Activated CD8-positive, alpha-beta memory T cell treated with anti-CD3 and anti-CD28 coated beads, Interleukin-2, amount 10 ng/mL, durations not matched to agents 7 days and 5 days (primary cell): ENCODE measurements at regions of chr1 and their contacts with region 1.

Region 1: GRCh38 chr1:109075531-109076490 is at the start of gene TAF13:
- DNase-seq: peak; percentile 94
- ATAC-seq: peak; percentile 100
- H3K4me3 Mint-ChIP-seq: peak within 1 kb of the TSS; percentile 96
- H3K27ac Mint-ChIP-seq: peak within 1 kb of the TSS; percentile 96
- H3K4me1 Mint-ChIP-seq: peaks cover 18% of the 10 kb centered on the region
- H3K27me3 Mint-ChIP-seq: no peaks in the 10 kb centered on the region
- total RNA-seq, gene TAF13: 18.1 to 26.4 TPM

Region 2: DNA sequence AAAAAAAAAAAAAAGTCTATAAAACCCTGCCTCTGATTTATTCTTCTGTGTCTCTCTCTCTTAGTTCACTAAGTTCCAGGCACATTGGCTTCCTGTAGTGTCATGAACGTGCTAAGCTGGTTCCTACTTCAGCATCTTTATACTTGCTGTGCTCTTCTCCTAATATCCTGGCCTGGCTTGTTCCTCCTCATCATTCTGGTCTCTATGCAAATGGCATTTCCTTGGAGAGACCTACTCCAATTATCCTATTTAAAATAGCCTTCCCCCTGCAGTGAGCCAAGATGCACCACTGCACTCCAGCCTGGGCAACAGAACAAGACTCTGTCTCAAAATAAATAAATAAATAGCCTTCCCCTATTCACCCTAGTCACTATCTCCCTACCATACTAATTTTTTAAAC is 102.9 kb before region 1 on chr1:
- CTCF ChIA-PET with region 1: no interaction called
- DNase-seq: no peak
- ATAC-seq: no peak
- H3K4me3 Mint-ChIP-seq: no peak overlapping the region
- H3K27ac Mint-ChIP-seq: no peak overlapping the region
- H3K4me1 Mint-ChIP-seq: peaks cover 5% of the 10 kb centered on the region
- H3K27me3 Mint-ChIP-seq: no peaks in the 10 kb centered on the region

Region 3: GRCh38 chr1:109090196-109091077 is 14.6 kb after region 1 on chr1 and contains the start of gene TMEM167B:
- CTCF ChIA-PET with region 1: interaction called, 22 read pairs
- DNase-seq: peak; percentile 95
- ATAC-seq: peak; percentile 96
- H3K4me3 Mint-ChIP-seq: peak within 1 kb of the TSS; percentile 98
- H3K27ac Mint-ChIP-seq: peak within 1 kb of the TSS; percentile 97
- H3K4me1 Mint-ChIP-seq: peaks cover 29% of the 10 kb centered on the region
- H3K27me3 Mint-ChIP-seq: no peaks in the 10 kb centered on the region
- total RNA-seq, gene TMEM167B: 21.8 to 27.0 TPM

Region 4: DNA sequence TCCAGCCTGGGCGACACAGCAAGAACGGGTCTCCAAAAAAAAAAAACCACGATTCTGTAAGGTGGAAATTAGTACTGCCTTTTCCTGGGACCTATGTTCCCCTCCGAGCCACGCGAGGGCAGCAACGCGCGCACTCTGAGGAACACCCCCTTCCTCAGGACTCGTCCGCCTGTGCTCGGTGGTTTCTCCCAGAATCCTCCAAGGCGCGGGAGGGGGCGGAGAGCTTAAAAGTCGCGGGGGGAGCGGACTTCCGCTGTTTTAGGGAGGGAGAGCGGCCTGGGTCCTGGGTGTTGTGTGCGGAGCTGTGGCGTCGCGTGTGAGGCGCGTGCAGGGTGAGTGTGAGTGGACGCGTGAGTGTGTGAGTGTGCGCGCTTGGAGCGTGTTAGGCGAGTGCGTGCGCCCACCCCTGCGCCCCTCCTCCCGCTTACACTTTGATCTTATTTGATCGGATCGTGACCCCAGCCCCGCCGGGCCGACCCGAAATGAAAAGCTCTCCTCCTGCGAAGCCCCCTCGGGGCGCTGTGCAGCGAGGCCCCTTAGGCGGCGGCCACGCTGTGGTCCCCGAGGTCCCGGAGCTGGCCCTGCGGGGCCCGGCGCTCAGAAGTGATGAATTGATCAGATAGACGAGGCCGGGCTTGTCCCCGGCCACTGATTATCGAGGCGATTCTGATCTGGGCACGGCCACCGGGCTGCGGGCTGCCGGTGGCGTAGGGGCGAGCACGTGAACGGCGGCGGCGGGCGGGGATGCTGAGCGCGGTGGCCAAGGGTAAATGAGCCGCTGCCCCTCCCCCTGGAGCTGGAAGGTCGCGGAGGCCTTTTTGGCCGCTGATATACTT is 24.3 kb after region 1 on chr1:
- CTCF ChIA-PET with region 1: interaction called, 19 read pairs
- DNase-seq: peak; percentile 98
- ATAC-seq: peak; percentile 94
- H3K4me3 Mint-ChIP-seq: peak overlapping the region; percentile 96
- H3K27ac Mint-ChIP-seq: peak overlapping the region; percentile 93
- H3K4me1 Mint-ChIP-seq: peaks cover 14% of the 10 kb centered on the region
- H3K27me3 Mint-ChIP-seq: no peaks in the 10 kb centered on the region